ENCODE measurements at regions of chr7 and their contacts with region 1.

Region 1: GRCh38 chr7:50418086-50418515 is 32.0 kb downstream of the FIGNL1 start:
- DNase-seq: peak; percentile 75
- H3K4me3 ChIP-seq: no peak overlapping the region
- H3K27ac ChIP-seq: no peak overlapping the region
- H3K4me1 ChIP-seq: no peaks in the 10 kb centered on the region
- H3K27me3 ChIP-seq: no peaks in the 10 kb centered on the region
- CTCF ChIP-seq: peak; percentile 66 to 75 (median 72)
- EP300 ChIP-seq: no peak
- POLR2A ChIP-seq: no peak

Region 2: DNA sequence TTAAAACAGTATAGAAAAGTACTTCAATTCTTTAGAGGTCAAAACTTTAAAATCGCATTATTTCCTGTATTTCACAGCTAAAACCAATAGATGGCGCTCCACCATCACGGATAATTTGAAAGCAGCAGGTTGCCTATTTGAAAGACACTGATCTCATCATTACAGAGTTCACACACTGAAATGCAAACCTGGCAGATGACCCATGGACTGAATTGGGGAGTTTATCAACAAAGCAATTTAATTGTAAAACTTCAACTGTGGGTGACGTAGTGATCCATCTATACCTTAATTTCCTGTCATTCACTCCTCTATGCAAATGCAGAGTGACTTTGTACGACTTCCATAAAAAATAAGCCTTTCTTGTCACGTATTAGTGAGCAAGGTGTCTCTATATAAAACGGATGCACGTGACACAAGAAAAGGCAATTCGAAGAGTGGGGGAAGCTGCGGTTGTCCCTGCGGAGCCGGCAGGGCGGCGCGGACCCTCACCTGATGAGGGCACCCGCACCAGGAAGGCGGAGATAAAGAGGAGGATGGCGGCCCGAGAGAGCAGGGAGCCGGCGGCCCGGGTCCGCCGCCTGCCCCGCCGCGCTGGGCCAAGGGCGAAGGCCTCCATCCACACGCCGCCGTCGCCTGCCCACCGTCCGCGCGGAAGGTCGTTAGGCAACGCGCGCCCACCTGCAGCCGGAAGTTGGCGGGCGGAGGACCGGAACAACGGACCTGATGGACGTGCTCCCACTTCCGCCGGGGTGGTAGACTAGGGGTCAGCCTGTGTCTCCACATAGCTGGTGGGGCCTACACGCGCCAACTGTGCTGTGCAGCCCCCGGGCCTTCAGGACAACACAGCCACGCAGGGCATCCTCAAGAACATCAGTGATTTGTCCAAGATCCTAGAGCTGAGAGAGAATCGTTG is 325.3 kb before region 1 on chr7 and contains the start of gene ZPBP:
- in situ Hi-C with region 1: no loop called
- intact Hi-C with region 1: loop called (anchors 10 kb)
- DNase-seq: no peak
- H3K4me3 ChIP-seq: peak within 1 kb of the TSS; percentile 23 to 42 (median 32)
- H3K27ac ChIP-seq: no peak within 1 kb of the TSS
- H3K4me1 ChIP-seq: peaks cover 0 to 6% (median 2%) of the 10 kb centered on the region in 4 donors
- H3K27me3 ChIP-seq: no peaks in the 10 kb centered on the region
- CTCF ChIP-seq: peak; percentile 64 to 75 (median 69)
- EP300 ChIP-seq: no peak
- POLR2A ChIP-seq: no peak
- total RNA-seq, gene ZPBP: not detected

Region 3: DNA sequence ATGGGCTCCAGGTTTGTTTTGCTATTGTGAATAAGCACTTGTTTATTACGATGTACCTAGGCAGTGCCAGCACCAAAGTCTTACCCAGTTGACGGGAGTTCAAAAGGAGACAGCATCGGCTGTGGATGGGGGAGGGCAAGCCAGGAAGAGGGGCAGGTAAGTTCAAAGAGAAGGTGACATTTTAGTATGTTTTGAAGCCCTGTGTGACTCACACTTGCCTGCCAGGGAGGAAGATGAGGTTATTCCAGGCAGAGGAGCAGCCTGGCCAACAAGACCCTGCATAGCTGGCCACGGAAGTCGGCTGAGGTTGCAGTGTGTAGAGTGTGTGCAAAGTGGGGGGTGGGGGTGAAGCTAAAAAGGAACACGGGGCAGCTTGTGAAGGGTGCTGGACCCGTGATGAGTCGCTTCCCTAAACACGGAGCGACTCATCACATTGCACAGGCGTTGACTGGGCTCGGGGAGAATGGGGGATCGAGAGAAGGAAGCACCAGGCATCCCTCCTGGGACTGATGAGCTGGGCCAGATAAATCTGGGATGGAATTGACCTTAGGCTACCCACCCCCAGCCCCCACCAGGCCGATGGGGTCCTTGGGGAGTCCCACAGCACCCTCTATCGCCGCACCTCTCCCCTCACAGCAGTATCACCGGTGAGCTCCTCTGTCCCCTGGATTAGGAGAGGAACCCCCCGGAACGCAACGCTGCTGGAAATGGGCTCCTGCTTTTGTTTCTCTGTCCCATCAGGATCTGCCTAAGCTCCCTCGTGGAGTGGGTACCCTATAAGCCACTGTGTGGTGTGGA is 211.4 kb before region 1 on chr7:
- in situ Hi-C with region 1: loop called in 3 of 4 experiments (anchors 10 to 25 kb)
- intact Hi-C with region 1: no loop called
- DNase-seq: peak; percentile 24
- H3K4me3 ChIP-seq: no peak overlapping the region
- H3K27ac ChIP-seq: no peak overlapping the region
- H3K4me1 ChIP-seq: no peaks in the 10 kb centered on the region
- H3K27me3 ChIP-seq: no peaks in the 10 kb centered on the region
- CTCF ChIP-seq: no peak
- EP300 ChIP-seq: no peak
- POLR2A ChIP-seq: no peak

Region 4: DNA sequence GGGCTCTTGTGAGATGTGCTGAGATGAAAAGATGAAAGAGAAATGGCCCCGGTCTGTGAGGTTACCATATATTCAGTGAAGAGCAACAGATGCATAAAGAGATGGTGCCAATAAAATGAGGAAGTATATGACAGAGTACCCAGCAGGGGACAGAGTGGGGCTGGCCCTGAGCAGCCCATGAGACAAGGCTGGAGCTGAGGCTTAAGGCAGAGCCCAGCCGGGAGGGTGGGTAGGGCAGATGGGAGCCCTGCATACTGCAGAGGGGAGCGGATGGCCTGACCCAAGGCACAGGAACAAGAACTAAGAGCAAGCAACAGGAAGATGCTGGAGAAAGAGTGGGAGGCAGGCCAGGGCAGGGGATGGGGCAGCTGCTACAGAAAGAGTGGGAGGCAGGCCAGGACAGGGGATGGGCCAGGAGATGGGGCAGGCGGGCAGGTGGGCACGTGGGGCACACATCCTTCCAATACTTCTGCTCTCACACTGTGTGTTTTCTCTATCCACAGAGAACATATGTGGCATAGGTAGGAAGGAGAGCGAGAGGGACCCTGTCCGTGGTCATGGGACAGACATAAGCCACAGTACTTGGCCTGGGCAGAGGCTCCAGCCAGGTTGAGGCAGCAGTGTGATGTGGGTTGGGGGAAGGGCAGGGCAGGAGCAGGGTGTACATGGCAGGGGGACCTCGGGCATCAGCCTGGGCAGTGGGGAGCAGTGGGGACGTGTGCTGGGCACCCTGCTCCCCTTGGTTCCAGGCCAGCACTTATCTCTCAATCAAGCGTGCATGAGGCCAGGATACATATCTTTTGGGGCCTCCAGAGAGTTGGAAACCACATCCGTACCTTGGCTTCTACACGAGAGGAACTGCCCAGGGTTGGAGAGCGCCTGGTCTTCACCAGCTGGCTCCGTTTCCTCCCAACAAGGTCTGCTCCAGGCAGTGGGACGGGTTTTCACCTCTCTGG is 205.2 kb before region 1 on chr7:
- in situ Hi-C with region 1: loop called in 3 of 4 experiments (anchors 10 to 25 kb)
- intact Hi-C with region 1: no loop called
- DNase-seq: no peak
- H3K4me3 ChIP-seq: no peak overlapping the region
- H3K27ac ChIP-seq: no peak overlapping the region
- H3K4me1 ChIP-seq: no peaks in the 10 kb centered on the region
- H3K27me3 ChIP-seq: no peaks in the 10 kb centered on the region
- CTCF ChIP-seq: no peak
- EP300 ChIP-seq: no peak
- POLR2A ChIP-seq: no peak

Region 5: DNA sequence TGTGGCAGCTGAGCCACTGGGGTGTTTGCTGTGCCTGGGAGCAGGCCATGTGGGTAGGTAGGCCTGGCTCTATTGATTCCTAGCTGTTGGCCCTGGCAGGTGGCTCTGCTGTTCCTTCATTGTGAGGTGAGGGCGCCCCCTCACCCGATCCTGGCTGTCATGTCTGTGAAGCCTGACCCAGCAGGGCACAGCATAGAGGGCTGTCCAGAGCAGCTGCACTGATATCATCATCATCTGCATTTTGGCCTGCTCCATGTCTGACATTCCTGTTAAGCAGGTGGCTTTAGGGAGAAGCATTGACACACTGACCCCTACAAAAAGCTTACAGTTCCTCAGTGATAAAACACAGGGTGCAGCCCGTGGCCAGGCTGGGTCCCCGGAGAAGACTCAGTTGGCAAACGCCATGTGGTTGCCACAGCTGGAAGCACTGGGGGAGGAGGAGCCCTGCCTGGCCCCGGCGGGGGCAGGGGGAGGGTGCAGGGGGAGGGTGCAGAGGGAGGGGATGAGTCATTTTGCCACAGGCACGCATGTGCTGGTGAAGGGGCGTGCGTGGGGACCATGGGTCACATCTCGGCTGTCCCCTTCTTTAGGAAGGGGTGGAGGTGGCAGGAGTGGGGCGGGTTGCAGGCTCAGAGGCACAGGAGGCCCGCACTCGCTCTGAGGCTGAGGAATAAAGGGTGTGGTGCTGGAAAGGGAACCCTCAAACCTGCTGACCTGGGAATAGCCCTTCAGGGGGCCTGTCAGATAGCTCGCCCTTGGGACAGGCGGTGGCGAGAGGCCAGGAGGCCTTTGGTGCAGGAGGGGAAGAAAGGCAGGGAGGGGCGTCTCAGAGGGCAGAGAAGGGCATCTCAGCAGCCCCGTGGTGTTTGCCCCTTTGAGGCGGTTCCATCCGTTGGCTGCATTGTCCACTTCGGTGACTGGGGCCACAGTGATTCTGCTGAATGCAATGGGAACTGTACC is 82.0 kb before region 1 on chr7:
- in situ Hi-C with region 1: no loop called
- intact Hi-C with region 1: no loop called
- DNase-seq: peak; percentile 68
- H3K4me3 ChIP-seq: no peak overlapping the region
- H3K27ac ChIP-seq: peak overlapping the region; percentile 56 to 78 (median 66)
- H3K4me1 ChIP-seq: no peaks in the 10 kb centered on the region
- H3K27me3 ChIP-seq: no peaks in the 10 kb centered on the region
- CTCF ChIP-seq: no peak
- EP300 ChIP-seq: no peak
- POLR2A ChIP-seq: no peak

Region 6: GRCh38 chr7:50449881-50450589 is 31.9 kb after region 1 on chr7 and contains the start of gene FIGNL1:
- in situ Hi-C with region 1: no loop called
- intact Hi-C with region 1: no loop called
- DNase-seq: peak; percentile 79
- H3K4me3 ChIP-seq: peak within 1 kb of the TSS; percentile 49 to 87 (median 72)
- H3K27ac ChIP-seq: peak within 1 kb of the TSS; percentile 59 to 85 (median 76)
- H3K4me1 ChIP-seq: peaks cover 0 to 16% (median 13%) of the 10 kb centered on the region in 4 donors
- H3K27me3 ChIP-seq: no peaks in the 10 kb centered on the region
- CTCF ChIP-seq: no peak
- EP300 ChIP-seq: no peak
- POLR2A ChIP-seq: peak; percentile 46
- total RNA-seq, gene FIGNL1: 0.80 to 6.2 (median 3.6) TPM